B cell (primary cell): ENCODE measurements at regions of chr10 and their contacts with region 1.

Region 1: GRCh38 chr10:72273410-72274212 is at the start of gene DDIT4:
- DNase-seq: peak; percentile 97
- ATAC-seq: peak; percentile 94
- H3K4me3 ChIP-seq: peak within 1 kb of the TSS; percentile 91 to 99 (median 98)
- H3K4me3 Mint-ChIP-seq: peak within 1 kb of the TSS; percentile 98
- H3K27ac ChIP-seq: peak within 1 kb of the TSS; percentile 80 to 87
- H3K27ac Mint-ChIP-seq: peak within 1 kb of the TSS; percentile 97
- H3K4me1 ChIP-seq: peaks cover 22 to 33% of the 10 kb centered on the region in 2 donors
- H3K4me1 Mint-ChIP-seq: peaks cover 45% of the 10 kb centered on the region
- H3K27me3 ChIP-seq: no peaks in the 10 kb centered on the region
- H3K27me3 Mint-ChIP-seq: no peaks in the 10 kb centered on the region
- CTCF ChIP-seq: no peak
- total RNA-seq, gene DDIT4: 103 and 110 TPM in 2 replicates

Region 2: GRCh38 chr10:72126184-72126871 is 147.3 kb before region 1 on chr10:
- CTCF ChIA-PET with region 1: interaction called, 10 read pairs
- POLR2A ChIA-PET with region 1: no interaction called
- intact Hi-C with region 1: no loop called
- DNase-seq: peak; percentile 53
- ATAC-seq: no peak
- H3K4me3 ChIP-seq: no peak overlapping the region
- H3K4me3 Mint-ChIP-seq: no peak overlapping the region
- H3K27ac ChIP-seq: no peak overlapping the region
- H3K27ac Mint-ChIP-seq: no peak overlapping the region
- H3K4me1 ChIP-seq: no peaks in the 10 kb centered on the region
- H3K4me1 Mint-ChIP-seq: no peaks in the 10 kb centered on the region
- H3K27me3 ChIP-seq: no peaks in the 10 kb centered on the region
- H3K27me3 Mint-ChIP-seq: no peaks in the 10 kb centered on the region
- CTCF ChIP-seq: peak; percentile 25

Region 3: DNA sequence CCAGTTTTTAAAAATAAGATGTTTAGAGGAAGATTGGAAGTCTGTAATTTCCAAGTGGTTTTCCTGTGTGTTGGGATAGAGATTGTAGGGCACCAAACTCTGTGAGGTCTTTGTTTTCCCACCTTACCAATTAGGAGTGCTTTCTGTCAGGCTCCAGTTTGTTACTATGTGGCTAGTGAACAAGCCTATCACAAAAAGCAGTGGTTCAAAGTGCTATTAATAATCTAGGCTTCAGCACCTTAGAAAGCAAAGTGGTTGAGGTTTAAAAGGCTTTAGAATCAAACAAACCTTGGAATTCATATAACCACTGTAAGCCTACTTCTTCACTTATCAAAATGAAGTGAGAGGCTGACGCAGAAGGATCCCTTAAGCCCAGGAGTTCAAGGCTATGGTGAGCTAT is 68.9 kb before region 1 on chr10:
- CTCF ChIA-PET with region 1: no interaction called
- POLR2A ChIA-PET with region 1: no interaction called
- intact Hi-C with region 1: no loop called
- DNase-seq: no peak
- ATAC-seq: no peak
- H3K4me3 ChIP-seq: no peak overlapping the region
- H3K4me3 Mint-ChIP-seq: no peak overlapping the region
- H3K27ac ChIP-seq: no peak overlapping the region
- H3K27ac Mint-ChIP-seq: no peak overlapping the region
- H3K4me1 ChIP-seq: no peaks in the 10 kb centered on the region
- H3K4me1 Mint-ChIP-seq: no peaks in the 10 kb centered on the region
- H3K27me3 ChIP-seq: no peaks in the 10 kb centered on the region
- H3K27me3 Mint-ChIP-seq: no peaks in the 10 kb centered on the region
- CTCF ChIP-seq: no peak

Region 4: DNA sequence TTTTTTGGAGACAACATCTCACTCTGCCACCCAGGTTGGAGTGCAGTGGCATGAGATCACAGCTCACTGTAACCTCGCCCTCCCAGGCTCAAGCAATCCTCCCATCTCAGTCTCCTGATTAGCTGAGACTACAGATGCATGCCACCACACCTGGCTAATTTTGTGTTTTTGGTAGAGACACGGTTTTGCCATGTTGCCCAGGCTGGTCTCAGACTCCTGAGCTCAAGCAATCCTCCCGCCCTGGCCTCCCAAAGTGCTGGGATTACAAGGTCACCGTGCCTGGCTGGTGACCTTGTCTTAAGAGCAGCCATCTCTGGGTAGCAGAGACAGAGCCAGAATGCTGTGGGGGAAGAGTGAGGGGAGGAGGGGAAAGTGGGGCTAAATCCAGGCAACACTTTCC is 31.8 kb before region 1 on chr10:
- CTCF ChIA-PET with region 1: interaction called, 5 read pairs
- POLR2A ChIA-PET with region 1: interaction called, 10 read pairs
- intact Hi-C with region 1: no loop called
- DNase-seq: no peak
- ATAC-seq: no peak
- H3K4me3 ChIP-seq: no peak overlapping the region
- H3K4me3 Mint-ChIP-seq: no peak overlapping the region
- H3K27ac ChIP-seq: no peak overlapping the region
- H3K27ac Mint-ChIP-seq: no peak overlapping the region
- H3K4me1 ChIP-seq: peaks cover 38 to 55% of the 10 kb centered on the region in 2 donors
- H3K4me1 Mint-ChIP-seq: peaks cover 59% of the 10 kb centered on the region
- H3K27me3 ChIP-seq: no peaks in the 10 kb centered on the region
- H3K27me3 Mint-ChIP-seq: no peaks in the 10 kb centered on the region
- CTCF ChIP-seq: no peak

Region 5: DNA sequence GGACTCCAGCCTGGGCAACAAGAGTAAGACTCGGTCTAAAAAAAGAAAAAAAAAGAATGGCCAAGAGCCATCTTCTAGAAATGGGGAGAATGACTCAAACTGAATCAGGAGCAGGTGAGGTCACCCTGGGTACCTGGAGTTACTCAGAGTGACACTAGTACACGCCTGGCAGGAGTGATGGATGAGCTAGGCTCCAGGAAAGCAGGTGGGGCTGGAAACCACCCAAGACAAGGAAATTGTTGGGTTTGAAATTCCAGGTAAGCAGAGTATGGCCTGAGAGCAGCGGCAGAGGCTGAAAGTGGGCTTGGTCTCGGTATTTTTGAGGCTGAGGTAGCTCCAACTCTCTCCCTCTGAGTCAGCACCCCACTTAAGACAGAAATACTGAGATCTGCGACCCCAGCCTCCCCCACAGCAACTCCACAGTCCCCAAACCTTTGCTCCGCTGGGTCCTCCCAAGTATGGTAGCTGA is 18.6 kb after region 1 on chr10:
- CTCF ChIA-PET with region 1: interaction called, 26 read pairs
- POLR2A ChIA-PET with region 1: interaction called, 57 read pairs
- intact Hi-C with region 1: loop called (anchors 1 kb)
- DNase-seq: no peak
- ATAC-seq: no peak
- H3K4me3 ChIP-seq: no peak overlapping the region
- H3K4me3 Mint-ChIP-seq: no peak overlapping the region
- H3K27ac ChIP-seq: peak overlapping the region in 1 of 2 donors; percentile 15
- H3K27ac Mint-ChIP-seq: peak overlapping the region; percentile 86
- H3K4me1 ChIP-seq: peaks cover 17 to 22% of the 10 kb centered on the region in 2 donors
- H3K4me1 Mint-ChIP-seq: peaks cover 40% of the 10 kb centered on the region
- H3K27me3 ChIP-seq: no peaks in the 10 kb centered on the region
- H3K27me3 Mint-ChIP-seq: no peaks in the 10 kb centered on the region
- CTCF ChIP-seq: no peak

Region 6: DNA sequence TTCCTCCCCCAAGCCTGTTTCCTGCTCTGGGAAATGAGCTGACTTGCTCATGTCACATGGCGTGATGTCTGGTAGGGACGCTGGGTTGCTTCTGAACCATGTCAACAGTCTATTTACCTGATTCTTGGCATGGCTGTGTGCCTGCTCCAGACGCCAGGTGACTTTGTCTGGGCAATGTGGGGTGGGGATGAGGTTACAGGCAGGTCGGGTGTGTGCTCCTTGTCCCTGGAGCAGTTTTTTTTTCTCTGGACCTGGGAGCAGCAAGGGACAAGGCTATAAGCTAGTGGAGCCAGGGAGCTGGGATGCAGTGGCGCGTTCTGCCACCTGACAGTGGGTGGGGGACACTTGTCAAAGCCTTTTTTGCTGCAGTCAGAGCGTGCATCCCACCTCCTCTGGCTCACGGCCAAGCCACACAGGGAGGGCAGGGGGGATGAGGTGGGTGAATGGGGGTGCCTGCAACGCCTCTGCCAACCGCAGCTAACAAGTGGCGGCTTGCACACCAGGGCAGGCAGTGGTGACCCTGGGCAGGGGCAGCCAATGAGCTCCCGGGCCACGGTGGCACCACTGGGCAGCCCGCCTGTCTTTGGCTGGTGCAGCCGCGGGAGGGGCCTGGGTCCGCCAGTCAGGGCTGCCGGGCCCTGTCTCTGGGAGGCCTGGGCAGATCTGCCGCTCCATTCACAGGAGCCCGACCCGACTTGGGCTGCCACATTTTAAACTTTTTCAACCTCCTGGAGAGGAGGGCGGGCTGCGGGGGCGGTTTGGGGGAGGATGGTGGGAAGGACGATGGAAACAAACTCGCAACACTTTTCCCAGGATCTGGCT is 58.2 kb after region 1 on chr10:
- CTCF ChIA-PET with region 1: interaction called, 132 read pairs
- POLR2A ChIA-PET with region 1: interaction called, 34 read pairs
- intact Hi-C with region 1: loop called (anchors 1 kb)
- DNase-seq: peak; percentile 93
- ATAC-seq: peak; percentile 79
- H3K4me3 ChIP-seq: peak overlapping the region in 4 of 5 experiments; percentile 31 to 38 (median 35)
- H3K4me3 Mint-ChIP-seq: peak overlapping the region; percentile 76
- H3K27ac ChIP-seq: peak overlapping the region; percentile 83 to 86
- H3K27ac Mint-ChIP-seq: peak overlapping the region; percentile 96
- H3K4me1 ChIP-seq: peaks cover 84 to 100% of the 10 kb centered on the region in 2 donors
- H3K4me1 Mint-ChIP-seq: peaks cover 90% of the 10 kb centered on the region
- H3K27me3 ChIP-seq: no peaks in the 10 kb centered on the region
- H3K27me3 Mint-ChIP-seq: no peaks in the 10 kb centered on the region
- CTCF ChIP-seq: peak; percentile 55

Region 7: GRCh38 chr10:73997787-73998622 is 1724.4 kb after region 1 on chr10 and contains the start of gene VCL:
- CTCF ChIA-PET with region 1: no interaction called
- POLR2A ChIA-PET with region 1: no interaction called
- intact Hi-C with region 1: loop called (anchors 10 kb)
- DNase-seq: peak; percentile 97
- ATAC-seq: peak; percentile 97
- H3K4me3 ChIP-seq: peak within 1 kb of the TSS; percentile 77 to 96 (median 93)
- H3K4me3 Mint-ChIP-seq: peak within 1 kb of the TSS; percentile 99
- H3K27ac ChIP-seq: peak within 1 kb of the TSS; percentile 61 to 89
- H3K27ac Mint-ChIP-seq: peak within 1 kb of the TSS; percentile 96
- H3K4me1 ChIP-seq: peaks cover 20 to 26% of the 10 kb centered on the region in 2 donors
- H3K4me1 Mint-ChIP-seq: peaks cover 45% of the 10 kb centered on the region
- H3K27me3 ChIP-seq: no peaks in the 10 kb centered on the region
- H3K27me3 Mint-ChIP-seq: no peaks in the 10 kb centered on the region
- CTCF ChIP-seq: no peak
- total RNA-seq, gene VCL: 29.8 and 37.0 TPM in 2 replicates